PC-9 (cell line): ENCODE measurements at regions of chr6 and their contacts with region 1.

Region 1: DNA sequence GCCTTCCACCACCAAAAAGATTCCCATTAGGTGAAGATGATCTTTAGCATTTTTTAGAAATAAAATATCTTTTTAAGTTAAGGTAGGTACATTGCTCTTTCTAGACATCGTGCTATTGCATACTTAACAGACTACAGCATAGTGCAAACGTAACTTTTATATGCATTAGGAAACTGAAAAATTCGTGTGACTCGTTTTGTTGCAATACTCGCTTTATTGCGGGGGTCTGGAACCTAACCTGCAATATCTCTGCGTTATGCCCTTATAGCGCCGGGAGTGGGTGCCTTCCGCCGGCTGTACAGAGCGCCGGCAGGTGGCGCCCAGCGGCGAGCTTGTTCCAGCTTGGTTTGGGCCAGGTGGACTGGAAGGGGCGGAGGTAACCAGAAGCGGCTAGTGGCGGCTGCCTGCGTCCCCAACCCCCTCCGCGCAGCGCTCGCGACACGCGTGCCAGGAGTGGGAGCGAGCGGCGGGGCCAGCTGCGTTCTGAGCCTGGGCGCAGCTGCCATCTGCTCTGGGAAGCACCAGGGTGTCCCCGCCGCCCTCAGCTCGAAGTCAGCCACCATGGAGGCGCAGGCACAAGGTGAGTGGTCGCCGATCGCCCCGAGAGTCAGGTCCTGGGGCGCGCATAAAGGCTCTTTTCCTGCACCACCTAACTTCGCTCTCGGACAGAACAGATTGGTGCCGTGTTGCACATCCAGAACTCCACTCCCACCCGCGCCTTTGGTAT is at the start of gene TPD52L1:
- DNase-seq: peak; percentile 75 to 84
- H3K4me3 ChIP-seq: peak within 1 kb of the TSS; percentile 74
- H3K27ac ChIP-seq: peak within 1 kb of the TSS; percentile 63
- H3K4me1 ChIP-seq: peaks cover 44% of the 10 kb centered on the region
- H3K27me3 ChIP-seq: no peaks in the 10 kb centered on the region
- CTCF ChIP-seq: peak; percentile 97
- total RNA-seq, gene TPD52L1: 184 and 203 TPM in 2 replicates

Region 2: GRCh38 chr6:125099211-125100073 is 54.1 kb before region 1 on chr6:
- CTCF ChIA-PET with region 1: no interaction called
- POLR2A ChIA-PET with region 1: no interaction called
- intact Hi-C with region 1: loop called (anchors 2 kb)
- DNase-seq: peak; percentile 57 to 74
- H3K4me3 ChIP-seq: peak overlapping the region; percentile 68
- H3K27ac ChIP-seq: no peak overlapping the region
- H3K4me1 ChIP-seq: peaks cover 24% of the 10 kb centered on the region
- H3K27me3 ChIP-seq: no peaks in the 10 kb centered on the region
- CTCF ChIP-seq: no peak

Region 3: GRCh38 chr6:125191916-125192609 is 38.5 kb after region 1 on chr6:
- CTCF ChIA-PET with region 1: interaction called, 3 read pairs
- POLR2A ChIA-PET with region 1: no interaction called
- intact Hi-C with region 1: loop called (anchors 1 kb)
- DNase-seq: peak; percentile 63 to 66
- H3K4me3 ChIP-seq: no peak overlapping the region
- H3K27ac ChIP-seq: peak overlapping the region; percentile 67
- H3K4me1 ChIP-seq: peaks cover 55% of the 10 kb centered on the region
- H3K27me3 ChIP-seq: no peaks in the 10 kb centered on the region
- CTCF ChIP-seq: peak; percentile 85

Region 4: DNA sequence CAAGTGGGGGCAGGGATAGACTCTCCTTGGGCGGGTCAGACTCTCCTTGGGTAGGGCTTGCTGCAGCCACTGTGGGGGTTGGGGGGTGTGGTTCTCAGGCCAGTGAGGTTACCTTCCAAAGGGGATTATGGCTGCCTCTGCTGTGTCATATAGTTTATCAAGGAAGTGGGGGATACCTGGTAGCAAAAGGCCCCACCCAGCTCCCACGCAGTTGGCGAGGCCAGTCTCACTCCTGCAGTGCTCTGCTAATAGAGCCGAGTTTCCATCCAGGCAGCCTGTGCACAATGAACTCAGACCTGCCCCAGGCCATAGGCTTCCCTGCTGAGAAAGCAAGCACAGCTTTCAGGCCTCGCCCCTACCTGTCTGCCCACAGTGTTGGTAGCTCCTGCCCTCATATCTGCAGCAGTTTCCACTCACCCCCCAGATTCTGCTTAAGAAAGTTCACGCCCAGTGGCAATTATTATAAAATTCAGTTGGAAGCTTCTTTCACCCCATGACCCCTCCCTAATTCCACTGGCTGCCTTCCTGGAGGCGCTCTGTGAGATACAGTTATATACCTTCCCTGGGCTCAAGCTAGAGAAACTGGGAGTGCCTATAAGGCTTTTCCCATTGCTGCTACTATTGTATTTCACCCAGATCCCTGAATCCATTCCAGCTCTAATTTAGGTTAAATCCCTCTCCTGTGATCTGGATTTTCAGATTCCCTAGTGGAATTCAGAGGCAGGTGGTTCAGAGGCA is 92.1 kb after region 1 on chr6:
- CTCF ChIA-PET with region 1: no interaction called
- POLR2A ChIA-PET with region 1: interaction called, 5 read pairs
- intact Hi-C with region 1: loop called (anchors 1 kb)
- DNase-seq: peak; percentile 76 to 86
- H3K4me3 ChIP-seq: peak overlapping the region; percentile 0; the same call in 1 of the 2 replicates
- H3K27ac ChIP-seq: peak overlapping the region; percentile 60
- H3K4me1 ChIP-seq: peaks cover 32% of the 10 kb centered on the region
- H3K27me3 ChIP-seq: no peaks in the 10 kb centered on the region
- CTCF ChIP-seq: no peak

Region 5: DNA sequence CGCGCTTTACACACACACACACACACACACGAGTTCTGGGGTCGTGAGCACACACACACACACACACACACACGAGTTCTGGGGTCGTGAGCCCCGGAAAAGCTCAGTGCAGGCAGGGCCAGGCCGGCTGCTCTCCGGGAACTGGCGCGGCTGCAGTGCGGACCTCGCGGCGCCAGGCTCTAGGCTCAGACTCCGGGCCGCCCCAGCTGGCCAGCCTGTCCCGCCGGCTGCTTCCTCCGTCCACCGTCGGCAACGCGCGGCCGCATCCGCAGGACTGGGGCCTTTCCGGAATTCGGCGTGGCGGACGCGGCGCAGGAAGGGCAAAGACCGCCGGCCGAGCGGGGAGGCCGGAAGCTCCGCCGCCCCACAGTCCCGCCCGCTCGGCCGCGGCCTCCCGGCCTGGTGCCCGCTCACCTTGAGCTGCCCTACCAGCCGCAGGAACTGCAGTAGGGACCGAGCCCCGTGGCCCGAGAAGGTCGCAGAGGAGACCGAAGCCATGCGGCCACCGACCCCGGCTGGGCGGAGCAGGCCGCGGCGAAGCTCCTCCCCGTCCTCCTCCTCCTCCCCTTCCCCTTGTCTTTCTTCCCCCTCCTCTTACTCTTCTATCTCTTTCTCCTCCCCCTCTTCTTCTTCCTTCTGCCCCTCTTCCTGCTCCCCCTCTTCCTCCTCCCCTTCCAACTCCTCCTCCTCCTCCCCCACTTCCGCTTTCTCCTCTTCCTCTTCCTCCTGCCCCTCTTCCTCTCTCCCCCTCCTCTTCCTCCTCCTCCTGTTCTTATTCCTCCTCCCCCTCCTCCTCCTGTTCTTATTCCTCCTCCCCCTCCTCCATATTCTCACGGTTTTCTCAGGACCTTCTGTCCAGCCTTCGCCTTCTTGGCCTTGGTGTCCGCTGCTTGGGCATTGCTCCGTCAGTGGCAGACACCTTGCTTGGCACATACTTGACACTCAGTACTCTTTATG is 148.2 kb after region 1 on chr6 and contains the start of gene HDDC2:
- CTCF ChIA-PET with region 1: no interaction called
- POLR2A ChIA-PET with region 1: no interaction called
- intact Hi-C with region 1: loop called (anchors 2 kb)
- DNase-seq: peak; percentile 67 to 68
- H3K4me3 ChIP-seq: peak within 1 kb of the TSS; percentile 89
- H3K27ac ChIP-seq: peak within 1 kb of the TSS; percentile 60
- H3K4me1 ChIP-seq: peaks cover 12% of the 10 kb centered on the region
- H3K27me3 ChIP-seq: no peaks in the 10 kb centered on the region
- CTCF ChIP-seq: no peak
- total RNA-seq, gene HDDC2: 50.1 and 55.2 TPM in 2 replicates

Region 6: GRCh38 chr6:125363039-125363823 is 209.7 kb after region 1 on chr6:
- CTCF ChIA-PET with region 1: no interaction called
- POLR2A ChIA-PET with region 1: no interaction called
- intact Hi-C with region 1: loop called (anchors 5 kb)
- DNase-seq: peak; percentile 64 to 86
- H3K4me3 ChIP-seq: peak overlapping the region; percentile 59
- H3K27ac ChIP-seq: peak overlapping the region; percentile 10
- H3K4me1 ChIP-seq: peaks cover 16% of the 10 kb centered on the region
- H3K27me3 ChIP-seq: no peaks in the 10 kb centered on the region
- CTCF ChIP-seq: no peak